Adrenal gland (tissue), 19 donors: ENCODE measurements at regions of chr4 and their contacts with region 1.

Region 1: GRCh38 chr4:122744229-122744628 is 11.7 kb downstream of the BBS12 start:
- DNase-seq: peak in 2 of 7 donors; percentile 21 to 27
- H3K4me3 ChIP-seq: no peak overlapping the region
- H3K27ac ChIP-seq: no peak overlapping the region
- H3K4me1 ChIP-seq: no peaks in the 10 kb centered on the region
- H3K27me3 ChIP-seq: no peaks in the 10 kb centered on the region
- CTCF ChIP-seq: no peak
- POLR2A ChIP-seq: no peak

Region 2: GRCh38 chr4:122577808-122578781 is 166.1 kb before region 1 on chr4:
- intact Hi-C with region 1: no loop called
- DNase-seq: peak; percentile 21 to 57 (median 26)
- H3K4me3 ChIP-seq: no peak overlapping the region
- H3K27ac ChIP-seq: no peak overlapping the region
- H3K4me1 ChIP-seq: no peaks in the 10 kb centered on the region
- H3K27me3 ChIP-seq: no peaks in the 10 kb centered on the region
- CTCF ChIP-seq: peak; percentile 36 to 58 (median 43)
- POLR2A ChIP-seq: no peak

Region 3: DNA sequence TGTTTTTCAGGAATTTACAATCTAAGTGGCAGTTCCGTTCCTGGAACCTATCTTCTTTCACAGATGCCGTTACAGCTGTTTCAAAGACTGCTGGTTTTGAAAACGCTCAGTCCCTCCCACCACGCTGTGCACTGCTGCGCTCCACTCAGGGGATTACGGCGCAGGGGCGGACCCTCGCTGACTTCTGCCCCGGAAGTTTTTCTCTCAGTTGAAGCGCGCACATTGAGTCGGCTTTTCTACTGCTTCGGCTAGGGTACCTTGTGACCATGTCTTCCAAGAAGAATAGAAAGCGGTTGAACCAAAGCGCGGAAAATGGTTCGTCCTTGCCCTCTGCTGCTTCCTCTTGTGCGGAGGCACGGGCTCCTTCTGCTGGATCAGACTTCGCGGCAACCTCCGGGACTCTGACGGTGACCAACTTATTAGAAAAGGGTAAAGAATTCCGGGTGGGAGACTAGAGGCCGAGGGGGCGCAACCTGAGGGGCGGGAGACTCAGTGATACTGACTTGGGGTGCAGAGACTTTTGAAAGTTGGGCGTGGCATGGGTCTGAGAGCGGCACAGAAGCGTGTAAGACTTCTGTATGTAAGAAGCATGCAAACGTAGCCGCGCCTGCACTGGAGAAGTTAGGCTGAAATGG is 178.8 kb after region 1 on chr4:
- intact Hi-C with region 1: loop called in 1 of 2 experiments (anchors 10 kb)
- DNase-seq: peak; percentile 78 to 92 (median 84)
- H3K4me3 ChIP-seq: peak overlapping the region; percentile 30 to 96 (median 85)
- H3K27ac ChIP-seq: peak overlapping the region in 4 of 5 donors; percentile 45 to 84 (median 61)
- H3K4me1 ChIP-seq: peaks cover 7 to 19% of the 10 kb centered on the region in 2 donors
- H3K27me3 ChIP-seq: no peaks in the 10 kb centered on the region
- CTCF ChIP-seq: no peak
- POLR2A ChIP-seq: peak in 1 of 2 donors; percentile 20